ENCODE measurements at regions of chr6 and their contacts with region 1.

Region 1: GRCh38 chr6:159463119-159463829 is 229.8 kb downstream of the SOD2 start:
- DNase-seq: peak; percentile 16
- ATAC-seq: peak; percentile 72
- H3K4me3 ChIP-seq: no peak overlapping the region
- H3K27ac ChIP-seq: no peak overlapping the region
- H3K4me1 ChIP-seq: no peaks in the 10 kb centered on the region
- H3K27me3 ChIP-seq: 0 out of 2 replicates have a peak, but pooled peaks cover 3% of the 10 kb centered on the region
- CTCF ChIP-seq: peak; percentile 43 to 52 (median 46); a peak in 4 of 6 replicates
- POLR2A ChIP-seq: no peak
- RAD21 ChIP-seq: peak; percentile 66

Region 2: GRCh38 chr6:159608961-159609651 is 145.8 kb after region 1 on chr6:
- CTCF ChIA-PET with region 1: no interaction called
- POLR2A ChIA-PET with region 1: no interaction called
- RAD21 ChIA-PET with region 1: no interaction called
- intact Hi-C with region 1: loop called (anchors 5 kb)
- DNase-seq: peak; percentile 58
- ATAC-seq: peak; percentile 97
- H3K4me3 ChIP-seq: no peak overlapping the region
- H3K27ac ChIP-seq: no peak overlapping the region
- H3K4me1 ChIP-seq: no peaks in the 10 kb centered on the region
- H3K27me3 ChIP-seq: no peaks in the 10 kb centered on the region
- CTCF ChIP-seq: peak; percentile 89 to 95 (median 94)
- POLR2A ChIP-seq: no peak
- RAD21 ChIP-seq: peak; percentile 96